Calu3 (cell line): ENCODE measurements at regions of chr10 and their contacts with region 1.

Region 1: DNA sequence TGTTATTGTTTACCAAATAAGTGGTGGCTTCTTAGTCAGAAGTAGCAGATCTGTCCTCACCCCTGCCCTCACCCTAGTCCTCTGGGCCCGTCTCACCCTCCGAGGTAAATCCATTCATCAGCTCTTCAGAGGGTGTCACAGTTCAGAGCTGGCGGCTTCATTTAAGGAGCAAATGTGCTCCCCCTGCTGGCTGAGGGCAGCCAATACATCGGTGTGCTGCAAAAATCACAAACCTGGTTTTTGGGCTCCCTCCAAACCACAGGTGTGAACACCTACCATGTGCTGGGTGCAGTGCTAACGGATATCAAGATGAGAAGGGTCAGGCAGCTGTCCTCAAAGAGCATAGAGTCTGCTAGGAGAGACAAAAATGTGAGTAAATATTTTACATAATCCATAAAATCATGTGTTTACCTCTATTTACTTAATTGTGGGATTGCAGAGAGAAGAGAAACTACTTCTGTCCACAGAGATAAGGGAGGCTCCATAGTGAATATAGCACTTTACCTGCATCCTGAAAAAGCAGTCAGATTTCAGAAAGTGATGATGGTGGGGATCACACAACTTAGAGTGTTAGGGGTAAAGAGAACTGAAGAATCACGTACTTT is 15.5 kb upstream of the CRTAC1 start:
- DNase-seq: peak; percentile 63
- H3K4me3 Mint-ChIP-seq: no peak overlapping the region
- H3K27ac Mint-ChIP-seq: no peak overlapping the region
- H3K4me1 Mint-ChIP-seq: peaks cover 10% of the 10 kb centered on the region
- H3K27me3 Mint-ChIP-seq: peaks cover 61% of the 10 kb centered on the region
- CTCF ChIP-seq: peak; percentile 64

Region 2: DNA sequence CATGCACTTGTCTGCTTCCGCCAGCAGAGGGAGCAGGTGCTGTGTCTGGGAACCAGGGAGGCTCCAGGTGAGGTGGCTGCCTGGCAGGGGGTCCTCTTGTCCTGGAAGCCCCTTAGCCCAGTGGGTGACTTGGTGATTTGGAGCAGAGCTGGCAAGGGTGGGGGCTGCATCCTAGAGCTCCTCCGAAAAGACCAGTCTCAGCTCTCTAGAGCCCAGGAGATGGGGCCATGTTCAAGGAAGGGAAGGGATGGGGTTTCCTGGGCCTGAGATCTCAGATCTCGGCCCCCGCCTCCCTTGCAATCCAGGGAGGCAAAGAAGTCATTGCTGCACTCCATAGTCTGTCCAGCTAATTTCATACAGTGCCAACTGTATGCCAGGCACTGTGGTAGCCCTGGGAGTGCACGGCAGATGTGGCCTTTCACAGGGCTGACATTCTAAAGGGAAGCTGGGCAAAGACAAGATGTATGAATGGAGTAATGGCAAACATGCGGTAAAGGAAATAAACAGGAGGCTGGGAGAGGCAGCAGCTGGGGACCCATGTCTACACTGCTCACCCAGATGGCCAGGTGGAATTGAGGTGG is 253.7 kb before region 1 on chr10:
- CTCF ChIA-PET with region 1: interaction called, 6 read pairs
- intact Hi-C with region 1: loop called (anchors 10 kb)
- DNase-seq: peak; percentile 75
- H3K4me3 Mint-ChIP-seq: no peak overlapping the region
- H3K27ac Mint-ChIP-seq: no peak overlapping the region
- H3K4me1 Mint-ChIP-seq: no peaks in the 10 kb centered on the region
- H3K27me3 Mint-ChIP-seq: peaks cover 15% of the 10 kb centered on the region
- CTCF ChIP-seq: peak; percentile 74

Region 3: DNA sequence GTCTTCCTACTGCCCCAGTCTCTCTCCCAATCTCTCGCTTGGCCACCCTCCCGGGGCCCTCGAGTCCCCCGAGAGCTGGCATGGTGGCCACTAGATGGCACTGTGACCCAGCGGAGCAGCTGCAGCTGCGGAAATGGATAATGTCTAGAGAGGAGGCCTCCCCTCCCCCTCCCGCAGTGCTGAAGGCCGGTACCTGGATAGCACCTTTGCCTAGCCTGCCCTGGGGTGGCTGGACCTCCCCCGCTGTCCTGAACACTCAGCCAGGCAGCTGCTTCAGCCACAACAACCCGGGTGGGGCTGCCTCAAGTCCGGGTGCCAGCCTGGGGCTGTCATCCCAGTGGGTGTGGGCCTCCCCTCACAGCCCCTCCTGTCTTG is 131.1 kb before region 1 on chr10:
- CTCF ChIA-PET with region 1: interaction called, 25 read pairs
- intact Hi-C with region 1: loop called (anchors 1 kb)
- DNase-seq: peak; percentile 82
- H3K4me3 Mint-ChIP-seq: no peak overlapping the region
- H3K27ac Mint-ChIP-seq: no peak overlapping the region
- H3K4me1 Mint-ChIP-seq: peaks cover 8% of the 10 kb centered on the region
- H3K27me3 Mint-ChIP-seq: peaks cover 58% of the 10 kb centered on the region
- CTCF ChIP-seq: peak; percentile 75